ENCODE measurements at regions of chr9 and their contacts with region 1.

Region 1: DNA sequence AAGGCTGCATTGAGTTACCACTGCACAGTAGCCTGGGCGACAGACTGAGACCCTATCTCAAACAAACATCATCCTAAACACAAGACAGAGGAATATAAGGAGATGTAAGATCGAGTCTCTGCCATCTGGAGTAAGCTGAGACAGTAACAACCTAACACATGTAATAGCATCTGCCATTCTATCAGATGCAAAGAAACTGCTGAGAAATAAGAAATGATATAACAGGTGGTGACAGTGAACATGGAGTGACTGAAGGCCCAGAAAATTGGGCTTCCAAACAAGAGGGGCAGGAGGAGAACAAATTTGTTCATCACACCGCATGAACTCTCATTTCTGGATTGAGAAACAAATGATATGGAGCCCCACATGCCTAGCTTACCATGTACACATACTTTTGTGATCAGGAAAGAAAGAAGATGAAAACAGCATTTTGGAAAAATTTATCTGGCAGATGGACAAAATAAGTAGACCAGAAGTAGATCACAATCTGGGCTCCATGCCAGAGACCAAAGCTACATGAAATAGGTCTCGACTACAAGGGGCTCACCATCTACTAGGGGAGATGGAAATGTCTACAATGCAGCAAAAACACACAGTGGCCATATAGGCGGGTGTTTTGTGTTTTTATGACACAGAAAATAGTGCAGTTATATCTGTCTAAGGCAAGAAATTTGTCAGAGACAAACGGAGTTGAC is 45.5 kb downstream of the ECPAS start:
- DNase-seq: no peak
- ATAC-seq: no peak
- H3K4me3 ChIP-seq: no peak overlapping the region
- H3K27ac ChIP-seq: no peak overlapping the region
- H3K4me1 ChIP-seq: peaks cover 5% of the 10 kb centered on the region; the same call in 1 of the 2 replicates
- H3K27me3 ChIP-seq: no peaks in the 10 kb centered on the region
- CTCF ChIP-seq: no peak
- EP300 ChIP-seq: no peak
- POLR2A ChIP-seq: no peak
- RAD21 ChIP-seq: no peak

Region 2: DNA sequence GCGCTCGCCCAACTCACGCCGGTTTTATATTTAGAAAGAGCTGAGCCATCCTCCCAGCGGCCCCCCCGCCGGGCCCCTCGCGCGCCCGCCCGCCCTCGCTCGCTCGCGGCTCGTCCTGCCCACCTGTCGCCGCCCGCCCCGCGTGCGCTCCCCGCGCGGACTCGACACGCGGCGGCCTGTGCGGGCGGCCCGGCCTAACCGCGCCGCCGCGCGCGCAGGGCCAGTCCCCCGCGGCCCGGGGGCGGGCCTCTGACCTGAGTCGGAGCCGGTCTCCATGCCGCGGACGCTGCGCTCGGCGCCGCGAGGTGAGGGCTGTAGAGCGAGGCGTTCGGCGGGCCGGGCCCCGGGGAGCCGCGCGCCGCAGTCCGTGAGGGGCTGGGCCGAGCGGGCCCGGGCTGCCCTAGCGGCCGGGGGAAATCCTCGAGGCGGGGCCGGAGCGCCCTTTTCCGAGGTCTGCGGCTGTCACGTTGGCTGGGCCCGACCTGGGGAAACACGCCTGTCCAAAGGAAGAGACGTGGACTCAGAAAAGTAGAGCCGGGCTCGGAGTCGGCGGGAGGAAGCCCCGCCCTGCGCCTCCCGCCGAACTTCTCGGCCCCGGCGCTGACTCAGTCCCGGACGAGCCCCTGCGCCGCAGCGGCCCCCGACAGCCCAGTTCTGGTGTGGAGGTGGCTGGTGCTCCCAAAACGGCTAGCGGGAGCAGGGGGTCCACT is 45.3 kb after region 1 on chr9 and contains the start of gene ECPAS:
- CTCF ChIA-PET with region 1: no interaction called
- POLR2A ChIA-PET with region 1: no interaction called
- in situ Hi-C with region 1: no loop called
- intact Hi-C with region 1: loop called (anchors 5 kb)
- DNase-seq: peak; percentile 74
- ATAC-seq: peak; percentile 86
- H3K4me3 ChIP-seq: peak within 1 kb of the TSS; percentile 83 to 95 (median 84)
- H3K27ac ChIP-seq: peak within 1 kb of the TSS; percentile 94
- H3K4me1 ChIP-seq: peaks cover 20% of the 10 kb centered on the region
- H3K27me3 ChIP-seq: no peaks in the 10 kb centered on the region
- CTCF ChIP-seq: peak; percentile 13; the same call in 1 of the 2 replicates
- EP300 ChIP-seq: no peak
- POLR2A ChIP-seq: peak; percentile 70 to 84
- RAD21 ChIP-seq: peak; percentile 27; the same call in 1 of the 2 replicates
- total RNA-seq, gene ECPAS: 58.0 and 81.7 TPM in 2 replicates